ENCODE measurements at regions of chr13 and their contacts with region 1.

Region 1: DNA sequence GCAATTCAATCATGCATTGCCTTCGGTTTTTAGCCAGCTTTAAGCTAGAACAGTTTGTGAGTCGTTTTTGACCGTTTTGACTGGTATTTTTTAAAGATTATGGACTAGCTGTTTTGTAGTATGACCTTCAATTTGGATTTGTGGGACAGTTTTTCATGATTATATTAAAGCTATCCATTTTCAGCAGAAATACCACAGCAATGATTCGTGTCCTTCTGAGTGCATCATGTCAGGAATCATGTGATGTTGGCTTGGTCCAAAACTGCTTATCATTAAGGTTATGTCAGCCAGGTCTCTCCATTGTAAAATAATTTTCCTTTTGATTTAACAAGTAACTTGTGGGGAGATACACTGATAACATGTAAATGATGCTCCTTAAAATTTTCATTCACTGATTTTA is 229.0 kb downstream of the POSTN start:
- DNase-seq: no peak
- H3K4me3 ChIP-seq: no peak overlapping the region
- H3K27ac ChIP-seq: no peak overlapping the region
- H3K4me1 ChIP-seq: no peaks in the 10 kb centered on the region
- H3K27me3 ChIP-seq: no peaks in the 10 kb centered on the region
- CTCF ChIP-seq: no peak

Region 2: GRCh38 chr13:37401721-37402120 is 32.1 kb after region 1 on chr13:
- CTCF ChIA-PET with region 1: no interaction called
- POLR2A ChIA-PET with region 1: interaction called, 30 read pairs
- intact Hi-C with region 1: no loop called
- DNase-seq: no peak
- H3K4me3 ChIP-seq: no peak overlapping the region
- H3K27ac ChIP-seq: no peak overlapping the region
- H3K4me1 ChIP-seq: no peaks in the 10 kb centered on the region
- H3K27me3 ChIP-seq: no peaks in the 10 kb centered on the region
- CTCF ChIP-seq: no peak

Measured in PC-9 (cell line).